Calu3 (cell line): ENCODE measurements at regions of chr11 and their contacts with region 1.

Region 1: GRCh38 chr11:85685125-85685819 is 723 bp downstream of the CCDC89 start:
- DNase-seq: no peak
- H3K4me3 Mint-ChIP-seq: no peak overlapping the region
- H3K27ac Mint-ChIP-seq: no peak overlapping the region
- H3K4me1 Mint-ChIP-seq: peaks cover under 1% of the 10 kb centered on the region
- H3K27me3 Mint-ChIP-seq: no peaks in the 10 kb centered on the region
- CTCF ChIP-seq: no peak

Region 2: GRCh38 chr11:85699957-85700741 is 14.9 kb after region 1 on chr11:
- CTCF ChIA-PET with region 1: no interaction called
- intact Hi-C with region 1: no loop called
- DNase-seq: no peak
- H3K4me3 Mint-ChIP-seq: no peak overlapping the region
- H3K27ac Mint-ChIP-seq: no peak overlapping the region
- H3K4me1 Mint-ChIP-seq: peaks cover 8% of the 10 kb centered on the region
- H3K27me3 Mint-ChIP-seq: no peaks in the 10 kb centered on the region
- CTCF ChIP-seq: no peak

Region 3: DNA sequence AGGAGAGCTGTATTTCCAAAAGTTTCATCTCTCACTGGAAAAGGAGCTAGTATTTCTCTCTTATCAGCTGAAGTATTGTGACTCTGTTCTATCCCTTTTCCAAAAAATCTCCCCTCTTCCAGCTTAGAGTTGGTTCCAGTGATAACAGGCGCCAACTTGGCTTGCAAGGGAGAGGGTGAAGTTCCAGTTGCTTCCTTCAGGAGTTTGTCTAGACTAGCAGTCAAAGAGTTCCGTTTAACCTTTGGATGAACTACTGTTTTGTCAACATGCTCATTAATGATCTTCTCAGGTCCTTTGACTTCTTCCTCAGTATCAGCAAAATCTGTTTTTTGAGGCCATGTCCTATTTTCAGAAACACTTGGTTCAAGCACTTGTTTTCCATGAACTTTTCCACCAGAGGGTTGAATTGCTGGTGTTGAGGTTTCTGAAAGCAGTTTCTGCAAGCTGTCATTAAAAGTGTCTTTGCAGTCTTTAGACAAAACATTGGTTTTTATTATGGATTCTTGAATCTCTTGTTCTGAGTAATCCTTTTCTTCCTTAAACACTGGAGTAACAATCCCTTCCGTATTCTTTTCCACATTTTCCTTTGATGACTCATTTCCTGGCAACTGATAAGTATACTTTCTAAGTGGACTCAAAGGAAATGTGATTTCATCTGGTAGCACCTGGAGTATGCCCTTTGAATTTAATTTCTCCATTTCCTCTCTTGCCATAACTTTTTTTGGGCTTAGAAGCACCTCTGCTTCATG is 40.4 kb after region 1 on chr11:
- CTCF ChIA-PET with region 1: no interaction called
- intact Hi-C with region 1: no loop called
- DNase-seq: no peak
- H3K4me3 Mint-ChIP-seq: no peak overlapping the region
- H3K27ac Mint-ChIP-seq: peak overlapping the region; percentile 69
- H3K4me1 Mint-ChIP-seq: peaks cover 22% of the 10 kb centered on the region
- H3K27me3 Mint-ChIP-seq: no peaks in the 10 kb centered on the region
- CTCF ChIP-seq: no peak

Region 4: DNA sequence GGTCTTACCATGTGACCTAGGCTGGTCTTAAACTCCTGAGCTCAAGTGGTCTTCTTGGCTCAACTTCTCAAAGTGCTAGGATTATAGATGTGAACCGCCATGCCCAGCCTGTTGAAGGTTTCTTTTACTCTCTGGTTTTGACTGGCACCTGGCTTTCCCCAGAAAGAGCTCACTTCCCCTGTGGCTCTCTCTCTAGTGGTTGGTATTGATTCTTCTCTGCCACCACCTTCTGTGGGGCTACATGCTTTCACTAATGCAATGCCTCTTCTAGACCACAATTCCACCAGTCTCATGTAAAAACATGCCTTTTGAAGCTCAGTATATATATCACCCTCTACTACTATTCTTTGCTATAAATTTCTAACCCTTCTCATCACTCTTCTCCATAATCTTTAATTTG is 237.1 kb after region 1 on chr11:
- CTCF ChIA-PET with region 1: interaction called, 11 read pairs
- intact Hi-C with region 1: no loop called
- DNase-seq: no peak
- H3K4me3 Mint-ChIP-seq: no peak overlapping the region
- H3K27ac Mint-ChIP-seq: no peak overlapping the region
- H3K4me1 Mint-ChIP-seq: no peaks in the 10 kb centered on the region
- H3K27me3 Mint-ChIP-seq: no peaks in the 10 kb centered on the region
- CTCF ChIP-seq: no peak